ENCODE measurements at regions of chr19 and their contacts with region 1.

Region 1: DNA sequence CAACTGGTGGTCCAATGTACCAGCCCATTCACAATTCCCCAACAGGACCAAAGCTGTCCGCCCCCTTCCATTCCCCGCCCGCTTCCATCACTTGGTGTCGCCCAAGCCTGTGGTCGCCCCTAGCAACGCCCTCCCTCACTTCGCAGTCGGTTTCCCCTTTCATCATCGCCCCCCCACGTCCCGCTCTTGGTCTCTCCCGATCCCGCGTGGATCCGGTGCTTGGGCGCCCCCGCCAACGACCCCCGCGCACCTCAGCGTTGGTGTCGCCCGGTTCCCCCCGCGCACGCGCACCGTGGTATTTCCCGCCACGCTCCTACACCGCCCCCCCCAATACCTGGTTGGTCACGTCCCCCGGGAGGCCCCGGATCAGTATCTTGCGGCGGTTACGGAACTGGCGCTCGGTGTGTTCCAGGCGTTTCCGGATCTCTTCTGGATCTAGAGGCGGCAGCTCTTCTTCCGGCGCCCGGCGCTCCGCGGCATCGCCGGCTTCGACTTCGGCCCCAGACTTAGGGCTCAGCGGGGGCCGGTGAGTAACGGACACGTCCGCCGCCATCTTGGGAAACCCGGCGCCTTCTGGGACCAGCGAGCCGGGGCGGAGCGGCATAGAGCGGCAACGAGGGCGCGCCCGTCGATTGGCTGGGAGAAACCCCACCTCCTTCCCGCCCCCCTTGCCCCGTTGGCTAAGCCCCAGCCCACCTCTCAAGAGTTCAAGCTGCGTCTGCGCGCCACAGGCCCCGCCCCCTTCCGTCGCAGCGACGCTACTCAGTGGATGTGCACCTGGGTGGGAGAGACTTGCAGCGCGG is at the start of gene RAVER1:
- DNase-seq: peak; percentile 97
- H3K4me3 ChIP-seq: peak within 1 kb of the TSS; percentile 31 to 71 (median 47)
- H3K27ac ChIP-seq: peak within 1 kb of the TSS; percentile 78
- H3K4me1 ChIP-seq: peaks cover 16% of the 10 kb centered on the region
- H3K27me3 ChIP-seq: no peaks in the 10 kb centered on the region
- CTCF ChIP-seq: no peak
- POLR2A ChIP-seq: peak; percentile 83
- total RNA-seq, gene RAVER1: 47.6 and 55.1 TPM in 2 replicates

Region 2: GRCh38 chr19:10292206-10292788 is 40.9 kb before region 1 on chr19:
- CTCF ChIA-PET with region 1: interaction called, 8 read pairs
- POLR2A ChIA-PET with region 1: no interaction called
- dilution Hi-C with region 1: no loop called
- intact Hi-C with region 1: loop called (anchors 2 kb)
- DNase-seq: peak; percentile 48
- H3K4me3 ChIP-seq: no peak overlapping the region
- H3K27ac ChIP-seq: no peak overlapping the region
- H3K4me1 ChIP-seq: peaks cover 25% of the 10 kb centered on the region
- H3K27me3 ChIP-seq: peaks cover 54 to 71% of the 10 kb centered on the region in 2 experiments
- CTCF ChIP-seq: no peak
- POLR2A ChIP-seq: no peak

Region 3: GRCh38 chr19:10315335-10316214 is 17.6 kb before region 1 on chr19 and contains the start of gene FDX2:
- CTCF ChIA-PET with region 1: interaction called, 6 read pairs
- POLR2A ChIA-PET with region 1: interaction called, 5 read pairs
- dilution Hi-C with region 1: no loop called
- intact Hi-C with region 1: loop called (anchors 2 kb)
- DNase-seq: peak; percentile 85
- H3K4me3 ChIP-seq: peak within 1 kb of the TSS; percentile 48 to 67 (median 51)
- H3K27ac ChIP-seq: no peak within 1 kb of the TSS
- H3K4me1 ChIP-seq: no peaks in the 10 kb centered on the region
- H3K27me3 ChIP-seq: no peaks in the 10 kb centered on the region
- CTCF ChIP-seq: no peak
- POLR2A ChIP-seq: peak; percentile 96
- total RNA-seq, gene FDX2: 20.5 and 22.4 TPM in 2 replicates

Region 4: GRCh38 chr19:10363789-10364281 is 30.7 kb after region 1 on chr19:
- CTCF ChIA-PET with region 1: no interaction called
- POLR2A ChIA-PET with region 1: no interaction called
- dilution Hi-C with region 1: no loop called
- intact Hi-C with region 1: no loop called
- DNase-seq: no peak
- H3K4me3 ChIP-seq: no peak overlapping the region
- H3K27ac ChIP-seq: no peak overlapping the region
- H3K4me1 ChIP-seq: no peaks in the 10 kb centered on the region
- H3K27me3 ChIP-seq: no peaks in the 10 kb centered on the region
- CTCF ChIP-seq: no peak
- POLR2A ChIP-seq: no peak

Region 5: GRCh38 chr19:10380313-10381102 is 47.4 kb after region 1 on chr19 and contains the start of gene TYK2:
- CTCF ChIA-PET with region 1: interaction called, 4 read pairs
- POLR2A ChIA-PET with region 1: interaction called, 3 read pairs
- dilution Hi-C with region 1: no loop called
- intact Hi-C with region 1: loop called (anchors 1 kb)
- DNase-seq: peak; percentile 99
- H3K4me3 ChIP-seq: peak within 1 kb of the TSS; percentile 78 to 96 (median 89)
- H3K27ac ChIP-seq: peak within 1 kb of the TSS; percentile 10
- H3K4me1 ChIP-seq: peaks cover 12% of the 10 kb centered on the region
- H3K27me3 ChIP-seq: no peaks in the 10 kb centered on the region
- CTCF ChIP-seq: no peak
- POLR2A ChIP-seq: peak; percentile 90
- total RNA-seq, gene TYK2: 138 and 142 TPM in 2 replicates

Region 6: DNA sequence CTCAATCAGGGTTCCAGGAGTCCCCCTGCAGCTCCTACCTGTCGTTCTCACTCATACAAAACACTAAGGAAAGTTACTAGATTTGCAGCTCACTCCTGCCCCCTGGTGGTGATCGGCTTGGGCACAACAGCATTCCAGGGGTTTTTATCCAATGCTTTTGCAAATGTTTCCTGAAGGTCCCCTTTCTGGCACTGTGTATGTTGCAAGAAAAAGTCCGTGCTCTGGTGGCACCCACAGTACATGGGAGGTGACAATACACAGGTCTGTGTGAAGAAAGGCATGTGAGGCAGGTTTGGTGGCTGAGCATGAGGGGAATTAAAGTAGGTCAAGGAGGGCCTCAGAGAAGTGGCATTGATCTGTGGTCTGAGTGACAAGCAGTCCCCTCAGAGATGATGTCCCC is 55.8 kb after region 1 on chr19:
- CTCF ChIA-PET with region 1: interaction called, 14 read pairs
- POLR2A ChIA-PET with region 1: interaction called, 3 read pairs
- dilution Hi-C with region 1: no loop called
- intact Hi-C with region 1: no loop called
- DNase-seq: peak; percentile 85
- H3K4me3 ChIP-seq: no peak overlapping the region
- H3K27ac ChIP-seq: no peak overlapping the region
- H3K4me1 ChIP-seq: no peaks in the 10 kb centered on the region
- H3K27me3 ChIP-seq: no peaks in the 10 kb centered on the region
- CTCF ChIP-seq: peak; percentile 88 to 93
- POLR2A ChIP-seq: peak; percentile 43

Region 7: GRCh38 chr19:10439588-10439987 is 106.4 kb after region 1 on chr19:
- CTCF ChIA-PET with region 1: no interaction called
- POLR2A ChIA-PET with region 1: interaction called, 10 read pairs
- dilution Hi-C with region 1: no loop called
- intact Hi-C with region 1: no loop called
- DNase-seq: no peak
- H3K4me3 ChIP-seq: no peak overlapping the region
- H3K27ac ChIP-seq: no peak overlapping the region
- H3K4me1 ChIP-seq: no peaks in the 10 kb centered on the region
- H3K27me3 ChIP-seq: no peaks in the 10 kb centered on the region
- CTCF ChIP-seq: no peak
- POLR2A ChIP-seq: no peak